ENCODE measurements at regions of chr1 and their contacts with region 1.

Region 1: GRCh38 chr1:231200388-231201031 is 38.7 kb downstream of the TRIM67 start:
- DNase-seq: no peak
- H3K4me3 ChIP-seq: no peak overlapping the region
- H3K27ac ChIP-seq: no peak overlapping the region
- H3K4me1 ChIP-seq: peaks cover 3 to 9% of the 10 kb centered on the region in 2 donors
- H3K27me3 ChIP-seq: no peaks in the 10 kb centered on the region
- CTCF ChIP-seq: no peak
- POLR2A ChIP-seq: no peak

Region 2: DNA sequence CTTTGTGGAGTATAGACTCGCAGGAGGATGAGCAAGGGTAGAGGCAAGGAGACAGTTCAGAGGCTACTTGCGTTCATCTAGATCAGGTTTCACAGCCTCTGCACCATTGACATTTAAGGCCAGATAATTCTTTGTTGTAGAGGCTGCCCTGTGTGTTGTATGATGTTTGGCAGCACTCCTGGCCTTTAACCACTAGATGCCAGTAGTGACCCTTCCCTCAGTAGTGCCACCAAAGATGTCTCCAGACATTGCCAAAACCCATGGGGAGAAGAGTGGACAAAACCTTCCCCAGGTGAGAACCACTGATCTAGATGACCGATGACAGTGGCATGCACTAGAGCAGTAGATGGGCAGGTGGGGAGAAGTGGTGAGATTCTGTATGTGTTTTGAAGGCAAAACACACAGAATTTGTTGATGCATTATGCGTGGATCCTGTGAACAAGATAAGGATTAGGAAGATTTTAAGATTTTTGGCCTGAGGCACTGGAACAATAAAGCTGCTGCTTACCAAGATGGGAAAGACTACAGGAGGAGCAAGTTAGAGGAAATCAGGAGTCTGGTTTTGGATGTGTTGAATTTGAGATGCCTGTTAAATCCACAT is 568.1 kb before region 1 on chr1:
- intact Hi-C with region 1: loop called (anchors 10 kb)
- DNase-seq: peak; percentile 35 to 42
- H3K4me3 ChIP-seq: no peak overlapping the region
- H3K27ac ChIP-seq: no peak overlapping the region
- H3K4me1 ChIP-seq: no peaks in the 10 kb centered on the region
- H3K27me3 ChIP-seq: no peaks in the 10 kb centered on the region
- CTCF ChIP-seq: peak in 4 of 6 experiments; percentile 44 to 57 (median 53)
- POLR2A ChIP-seq: no peak

Region 3: GRCh38 chr1:231053493-231054162 is 146.9 kb before region 1 on chr1:
- intact Hi-C with region 1: no loop called
- DNase-seq: peak; percentile 33 to 43
- H3K4me3 ChIP-seq: no peak overlapping the region
- H3K27ac ChIP-seq: no peak overlapping the region
- H3K4me1 ChIP-seq: peaks cover 10 to 11% of the 10 kb centered on the region in 2 donors
- H3K27me3 ChIP-seq: no peaks in the 10 kb centered on the region
- CTCF ChIP-seq: no peak
- POLR2A ChIP-seq: no peak